Ascending aorta (tissue), 2 donors: ENCODE measurements at regions of chr19 and their contacts with region 1.

Region 1: DNA sequence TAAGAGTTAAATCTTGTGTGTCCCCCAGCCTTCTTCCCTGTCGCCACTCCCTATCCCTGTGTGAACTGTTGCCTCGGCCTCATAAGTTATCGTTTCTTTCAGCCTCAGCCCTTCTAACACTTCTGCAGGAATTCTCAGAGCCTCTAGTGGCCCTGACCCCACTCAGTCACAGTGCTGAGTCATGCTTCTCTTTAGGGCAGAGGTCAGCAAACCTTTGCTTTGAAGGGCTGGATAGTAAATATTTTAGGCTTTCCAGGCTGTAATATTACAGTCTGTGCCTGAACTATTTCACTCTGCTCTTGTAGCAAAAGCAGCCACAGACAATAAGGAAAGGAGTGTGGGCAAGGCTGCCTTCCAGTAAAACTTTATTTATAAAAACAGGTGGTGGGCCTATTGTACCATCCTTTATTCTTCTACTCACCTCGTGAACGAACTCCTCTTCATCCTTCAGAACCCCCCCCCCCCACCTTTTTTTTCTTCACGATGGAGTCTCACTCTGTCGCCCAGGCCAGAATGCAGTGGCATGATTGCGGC is 22.1 kb downstream of the MYO9B start:
- DNase-seq: no peak
- H3K4me3 ChIP-seq: no peak overlapping the region
- H3K27ac ChIP-seq: peak overlapping the region; percentile 71 to 93
- H3K4me1 ChIP-seq: peaks cover 17 to 38% of the 10 kb centered on the region in 2 donors
- H3K27me3 ChIP-seq: no peaks in the 10 kb centered on the region
- CTCF ChIP-seq: no peak

Region 2: DNA sequence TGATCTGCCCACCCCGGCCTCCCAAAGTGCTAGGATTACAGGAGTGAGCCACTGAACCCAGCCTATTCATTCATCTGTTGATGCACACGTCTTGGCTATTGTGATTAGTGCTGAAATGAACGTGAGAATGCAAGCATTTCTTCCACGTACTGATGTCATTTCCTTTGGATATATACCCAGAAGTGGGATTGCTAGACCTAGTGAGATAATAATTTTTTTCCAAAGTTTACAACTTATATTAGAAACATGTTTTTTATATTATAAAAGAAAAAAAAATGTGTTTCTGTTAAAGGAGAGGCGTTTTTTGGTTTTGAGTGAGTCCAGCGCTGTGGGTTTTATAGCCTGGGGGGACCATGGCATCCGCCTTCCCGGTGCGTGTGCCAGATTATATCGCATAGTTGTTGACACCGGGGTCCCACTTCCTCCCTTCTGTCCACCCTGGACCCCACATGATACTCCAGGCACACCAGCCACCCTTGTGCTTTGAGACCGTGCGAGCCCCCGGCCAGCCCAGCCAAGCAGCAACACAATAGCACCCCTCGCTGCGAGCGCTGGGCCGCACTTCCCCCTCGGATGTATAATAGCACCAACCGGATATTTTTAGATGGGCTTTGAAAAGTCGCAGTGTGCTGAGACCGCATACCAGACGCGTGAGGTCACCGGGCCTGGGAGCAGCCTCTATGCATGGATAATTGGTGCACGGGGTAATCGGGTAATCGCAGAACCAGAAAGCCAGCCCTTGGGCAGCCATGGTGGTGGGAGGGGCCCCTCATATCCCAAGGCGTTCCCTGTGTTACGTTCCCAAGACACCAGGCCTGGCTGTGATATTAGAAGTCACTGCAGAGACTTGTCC is 37.6 kb after region 1 on chr19:
- intact Hi-C with region 1: loop called (anchors 5 kb)
- DNase-seq: peak; percentile 94 to 99
- H3K4me3 ChIP-seq: peak overlapping the region; percentile 39 to 46
- H3K27ac ChIP-seq: peak overlapping the region; percentile 94 to 97
- H3K4me1 ChIP-seq: peaks cover 23 to 46% of the 10 kb centered on the region in 2 donors
- H3K27me3 ChIP-seq: no peaks in the 10 kb centered on the region
- CTCF ChIP-seq: peak in 2 of 3 experiments; percentile 11 to 48